ENCODE measurements at regions of chr1 and their contacts with region 1.

Region 1: DNA sequence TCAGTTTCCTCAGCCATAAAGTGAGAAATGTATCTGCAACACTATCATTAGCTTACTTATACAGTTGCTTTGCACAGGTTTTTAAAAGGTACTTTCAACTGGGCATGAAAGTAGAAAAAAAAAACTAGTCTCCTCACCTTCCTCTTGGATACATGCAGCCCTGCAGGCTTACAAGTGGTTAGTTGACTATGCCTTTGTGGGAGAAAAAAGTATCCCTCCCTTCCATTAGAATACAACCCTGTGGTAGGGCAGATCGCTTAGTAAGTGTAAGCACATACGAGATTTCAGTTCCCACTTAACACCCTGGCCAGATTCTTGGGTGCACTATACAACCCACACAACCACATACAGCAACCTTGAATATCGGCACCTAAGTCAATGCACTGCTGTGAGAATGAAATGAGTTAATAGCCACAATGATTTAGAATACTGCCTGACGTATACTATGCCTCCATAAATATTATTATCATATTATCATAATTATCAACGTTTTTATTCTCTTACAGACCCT is 54.7 kb downstream of the PIGK start:
- DNase-seq: no peak
- H3K4me3 Mint-ChIP-seq: no peak overlapping the region
- H3K27ac Mint-ChIP-seq: no peak overlapping the region
- H3K4me1 Mint-ChIP-seq: peaks cover 12% of the 10 kb centered on the region
- H3K27me3 Mint-ChIP-seq: no peaks in the 10 kb centered on the region

Region 2: GRCh38 chr1:77193951-77194350 is 29.5 kb after region 1 on chr1:
- CTCF ChIA-PET with region 1: no interaction called
- intact Hi-C with region 1: loop called (anchors 2 kb)
- DNase-seq: no peak
- H3K4me3 Mint-ChIP-seq: no peak overlapping the region
- H3K27ac Mint-ChIP-seq: no peak overlapping the region
- H3K4me1 Mint-ChIP-seq: peaks cover 29% of the 10 kb centered on the region
- H3K27me3 Mint-ChIP-seq: no peaks in the 10 kb centered on the region

Measured in activated naive CD4-positive, alpha-beta T cell treated with anti-CD3 and anti-CD28 coated beads for 36 hours (primary cell).